H1 (cell line): ENCODE measurements at regions of chr18 and their contacts with region 1.

Region 1: DNA sequence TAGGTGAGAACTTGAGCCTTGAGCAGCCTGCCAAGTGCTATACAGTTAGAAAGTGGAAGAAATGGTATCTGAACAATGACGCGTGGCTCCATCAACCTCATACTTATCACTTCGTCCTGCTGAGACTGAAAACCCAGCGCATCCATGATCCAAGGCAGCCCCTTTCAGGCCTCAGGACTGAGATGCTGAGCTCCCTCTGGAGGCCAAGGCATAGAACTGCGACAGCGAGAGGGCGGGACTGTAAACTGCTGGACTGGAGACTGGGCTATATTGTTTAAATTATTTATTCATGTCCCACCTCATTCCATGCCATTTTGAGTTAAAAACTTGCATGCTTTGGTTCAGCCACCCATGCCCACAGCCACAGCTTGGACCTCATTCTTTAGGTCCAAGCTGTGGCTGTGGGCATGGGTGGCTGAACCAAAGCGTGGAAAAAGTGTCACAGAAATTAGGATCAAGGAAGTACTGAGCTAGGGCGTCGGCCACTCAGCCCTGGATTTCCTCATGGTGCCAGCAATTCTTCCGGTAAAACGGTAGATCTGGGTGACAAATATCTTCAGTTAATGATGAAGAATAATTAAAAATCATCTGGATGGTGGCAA is 195.5 kb downstream of the L3MBTL4 start:
- DNase-seq: peak; percentile 15 to 76
- H3K4me3 ChIP-seq: no peak overlapping the region
- H3K27ac ChIP-seq: no peak overlapping the region
- H3K4me1 ChIP-seq: no peaks in the 10 kb centered on the region
- H3K27me3 ChIP-seq: no peaks in the 10 kb centered on the region
- CTCF ChIP-seq: peak; percentile 86 to 93 (median 91)
- EP300 ChIP-seq: no peak
- POLR2A ChIP-seq: no peak
- RAD21 ChIP-seq: peak; percentile 88 to 94

Region 2: GRCh38 chr18:5868218-5869115 is 350.8 kb before region 1 on chr18:
- CTCF ChIA-PET with region 1: interaction called, 16 read pairs
- POLR2A ChIA-PET with region 1: no interaction called
- DNase-seq: peak in 1 of 2 experiments; percentile 76
- H3K4me3 ChIP-seq: no peak overlapping the region
- H3K27ac ChIP-seq: no peak overlapping the region
- H3K4me1 ChIP-seq: no peaks in the 10 kb centered on the region
- H3K27me3 ChIP-seq: no peaks in the 10 kb centered on the region; a peak in 1 of 7 replicates
- CTCF ChIP-seq: peak; percentile 39 to 84 (median 82)
- EP300 ChIP-seq: no peak
- POLR2A ChIP-seq: no peak
- RAD21 ChIP-seq: peak; percentile 92 to 96

Region 3: GRCh38 chr18:6199777-6200176 is 19.4 kb before region 1 on chr18:
- CTCF ChIA-PET with region 1: interaction called, 12 read pairs
- POLR2A ChIA-PET with region 1: no interaction called
- DNase-seq: no peak
- H3K4me3 ChIP-seq: no peak overlapping the region
- H3K27ac ChIP-seq: no peak overlapping the region
- H3K4me1 ChIP-seq: no peaks in the 10 kb centered on the region
- H3K27me3 ChIP-seq: no peaks in the 10 kb centered on the region; a peak in 1 of 7 replicates
- CTCF ChIP-seq: no peak
- EP300 ChIP-seq: no peak
- POLR2A ChIP-seq: no peak
- RAD21 ChIP-seq: peak in 1 of 2 experiments; percentile 24; a peak in 1 of 4 replicates

Region 4: GRCh38 chr18:6207116-6207515 is 12.1 kb before region 1 on chr18:
- CTCF ChIA-PET with region 1: interaction called, 17 read pairs
- POLR2A ChIA-PET with region 1: no interaction called
- DNase-seq: no peak
- H3K4me3 ChIP-seq: no peak overlapping the region
- H3K27ac ChIP-seq: no peak overlapping the region
- H3K4me1 ChIP-seq: peaks cover 0 to 5% (median 2%) of the 10 kb centered on the region in 4 experiments; a peak in 2 of 7 replicates
- H3K27me3 ChIP-seq: no peaks in the 10 kb centered on the region; a peak in 1 of 7 replicates
- CTCF ChIP-seq: no peak
- EP300 ChIP-seq: no peak
- POLR2A ChIP-seq: no peak
- RAD21 ChIP-seq: no peak

Region 5: DNA sequence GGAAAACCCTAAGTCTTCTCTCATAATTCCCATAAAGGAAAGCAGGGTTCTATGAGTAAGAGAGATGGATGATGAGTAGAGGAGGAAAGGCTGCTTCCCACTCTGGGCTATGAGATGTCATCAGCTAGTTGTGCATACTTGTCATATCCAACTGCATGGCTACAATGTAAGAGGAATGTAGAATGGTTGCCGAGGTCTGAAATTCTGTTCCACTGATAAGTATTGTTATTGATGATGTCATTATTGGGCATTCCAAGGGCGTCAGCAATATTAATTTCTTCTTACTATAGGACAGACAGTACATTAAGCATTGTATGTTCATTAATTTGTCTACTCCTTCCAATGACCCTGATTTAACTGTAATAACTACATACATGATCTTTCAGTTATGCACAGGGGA is 107.3 kb after region 1 on chr18:
- CTCF ChIA-PET with region 1: no interaction called
- POLR2A ChIA-PET with region 1: no interaction called
- DNase-seq: no peak
- H3K4me3 ChIP-seq: no peak overlapping the region
- H3K27ac ChIP-seq: no peak overlapping the region
- H3K4me1 ChIP-seq: no peaks in the 10 kb centered on the region
- H3K27me3 ChIP-seq: no peaks in the 10 kb centered on the region
- CTCF ChIP-seq: no peak
- EP300 ChIP-seq: no peak
- POLR2A ChIP-seq: no peak
- RAD21 ChIP-seq: no peak

Region 6: DNA sequence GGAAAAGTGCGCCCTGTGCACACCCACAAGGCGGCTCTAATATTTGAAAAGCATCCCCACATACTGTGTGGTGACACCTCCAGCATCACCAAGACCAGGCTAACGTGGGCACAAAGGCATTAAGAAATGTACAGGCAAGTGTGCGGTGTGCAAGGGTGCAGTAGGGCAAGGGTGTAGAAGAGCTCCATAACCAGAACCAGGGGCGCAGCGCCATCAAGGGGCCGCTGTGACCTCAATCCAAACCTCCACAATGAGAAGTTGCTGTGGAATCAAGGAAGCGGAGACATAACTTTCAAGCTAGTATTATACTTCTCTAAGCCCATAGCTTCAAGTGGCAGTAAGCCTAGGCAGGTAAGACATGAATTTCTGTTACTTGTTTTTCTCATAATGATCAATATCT is 182.5 kb after region 1 on chr18:
- CTCF ChIA-PET with region 1: interaction called, 10 read pairs
- POLR2A ChIA-PET with region 1: no interaction called
- DNase-seq: peak in 1 of 2 experiments; percentile 60
- H3K4me3 ChIP-seq: no peak overlapping the region
- H3K27ac ChIP-seq: no peak overlapping the region
- H3K4me1 ChIP-seq: peaks cover 0 to 3% (median 0%) of the 10 kb centered on the region in 4 experiments; a peak in 2 of 7 replicates
- H3K27me3 ChIP-seq: no peaks in the 10 kb centered on the region
- CTCF ChIP-seq: peak; percentile 65 to 85 (median 73)
- EP300 ChIP-seq: no peak
- POLR2A ChIP-seq: no peak
- RAD21 ChIP-seq: peak; percentile 83 to 90